CD4-positive, alpha-beta T cell (primary cell): ENCODE measurements at regions of chr19 and their contacts with region 1.

Region 1: GRCh38 chr19:17859533-17860330 is at the start of gene RPL18A:
- DNase-seq: peak; percentile 96 to 100 (median 99)
- ATAC-seq: peak; percentile 95
- H3K4me3 ChIP-seq: peak within 1 kb of the TSS; percentile 86
- H3K4me3 Mint-ChIP-seq: peak within 1 kb of the TSS; percentile 100
- H3K27ac ChIP-seq: peak within 1 kb of the TSS; percentile 1 to 71
- H3K27ac Mint-ChIP-seq: peak within 1 kb of the TSS; percentile 88
- H3K4me1 ChIP-seq: peaks cover 37% of the 10 kb centered on the region
- H3K4me1 Mint-ChIP-seq: peaks cover 33% of the 10 kb centered on the region
- H3K27me3 ChIP-seq: no peaks in the 10 kb centered on the region
- H3K27me3 Mint-ChIP-seq: no peaks in the 10 kb centered on the region
- CTCF ChIP-seq: peak; percentile 82
- total RNA-seq, gene RPL18A: 4,157 to 4,260 TPM

Region 2: DNA sequence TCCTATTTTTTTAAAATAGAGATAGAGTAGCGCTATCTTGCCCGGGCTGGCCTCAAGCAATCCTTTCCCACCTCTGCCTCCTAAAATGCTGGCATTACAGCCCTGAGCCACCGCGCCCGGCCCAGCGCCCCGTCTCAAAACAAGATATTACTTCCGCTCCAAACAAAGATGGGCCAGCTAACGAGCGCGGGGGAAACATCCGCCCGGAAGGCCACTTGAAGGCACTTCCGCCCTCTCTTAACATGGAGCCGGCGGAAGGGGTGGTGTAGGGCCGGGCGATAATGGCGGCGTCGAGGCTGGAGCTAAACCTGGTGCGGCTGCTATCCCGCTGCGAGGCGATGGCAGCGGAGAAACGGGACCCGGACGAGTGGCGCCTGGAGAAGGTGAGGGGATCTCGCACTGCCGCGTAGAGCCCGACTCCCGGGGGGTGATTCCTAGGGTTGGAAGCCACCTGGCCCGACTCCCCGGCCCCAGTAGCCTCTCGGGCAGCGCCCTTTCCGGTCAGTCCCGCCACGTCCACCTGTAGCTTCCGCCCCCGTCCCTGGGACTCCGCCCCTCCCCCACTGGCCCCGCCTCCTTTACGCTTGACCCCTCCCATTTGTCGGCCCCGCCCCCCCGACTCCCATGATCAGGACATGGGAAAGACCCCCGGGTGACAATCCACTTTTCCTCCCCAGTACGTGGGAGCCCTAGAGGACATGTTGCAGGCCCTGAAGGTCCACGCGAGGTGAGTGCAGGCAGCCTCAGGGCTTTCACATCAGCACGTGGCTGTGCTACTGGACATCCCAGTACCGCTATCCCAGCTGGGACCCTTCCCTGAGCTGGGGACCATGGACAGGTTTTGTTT is 644.4 kb before region 1 on chr19 and contains the start of gene USE1:
- CTCF ChIA-PET with region 1: no interaction called
- POLR2A ChIA-PET with region 1: no interaction called
- intact Hi-C with region 1: no loop called
- DNase-seq: peak; percentile 80 to 95 (median 85)
- ATAC-seq: peak; percentile 98
- H3K4me3 ChIP-seq: peak within 1 kb of the TSS; percentile 93
- H3K4me3 Mint-ChIP-seq: peak within 1 kb of the TSS; percentile 88
- H3K27ac ChIP-seq: peak within 1 kb of the TSS; percentile 74 to 97
- H3K27ac Mint-ChIP-seq: peak within 1 kb of the TSS; percentile 94
- H3K4me1 ChIP-seq: peaks cover 22% of the 10 kb centered on the region
- H3K4me1 Mint-ChIP-seq: peaks cover 11% of the 10 kb centered on the region
- H3K27me3 ChIP-seq: no peaks in the 10 kb centered on the region
- H3K27me3 Mint-ChIP-seq: no peaks in the 10 kb centered on the region
- CTCF ChIP-seq: no peak
- total RNA-seq, gene USE1: 23.1 to 24.3 TPM

Region 3: DNA sequence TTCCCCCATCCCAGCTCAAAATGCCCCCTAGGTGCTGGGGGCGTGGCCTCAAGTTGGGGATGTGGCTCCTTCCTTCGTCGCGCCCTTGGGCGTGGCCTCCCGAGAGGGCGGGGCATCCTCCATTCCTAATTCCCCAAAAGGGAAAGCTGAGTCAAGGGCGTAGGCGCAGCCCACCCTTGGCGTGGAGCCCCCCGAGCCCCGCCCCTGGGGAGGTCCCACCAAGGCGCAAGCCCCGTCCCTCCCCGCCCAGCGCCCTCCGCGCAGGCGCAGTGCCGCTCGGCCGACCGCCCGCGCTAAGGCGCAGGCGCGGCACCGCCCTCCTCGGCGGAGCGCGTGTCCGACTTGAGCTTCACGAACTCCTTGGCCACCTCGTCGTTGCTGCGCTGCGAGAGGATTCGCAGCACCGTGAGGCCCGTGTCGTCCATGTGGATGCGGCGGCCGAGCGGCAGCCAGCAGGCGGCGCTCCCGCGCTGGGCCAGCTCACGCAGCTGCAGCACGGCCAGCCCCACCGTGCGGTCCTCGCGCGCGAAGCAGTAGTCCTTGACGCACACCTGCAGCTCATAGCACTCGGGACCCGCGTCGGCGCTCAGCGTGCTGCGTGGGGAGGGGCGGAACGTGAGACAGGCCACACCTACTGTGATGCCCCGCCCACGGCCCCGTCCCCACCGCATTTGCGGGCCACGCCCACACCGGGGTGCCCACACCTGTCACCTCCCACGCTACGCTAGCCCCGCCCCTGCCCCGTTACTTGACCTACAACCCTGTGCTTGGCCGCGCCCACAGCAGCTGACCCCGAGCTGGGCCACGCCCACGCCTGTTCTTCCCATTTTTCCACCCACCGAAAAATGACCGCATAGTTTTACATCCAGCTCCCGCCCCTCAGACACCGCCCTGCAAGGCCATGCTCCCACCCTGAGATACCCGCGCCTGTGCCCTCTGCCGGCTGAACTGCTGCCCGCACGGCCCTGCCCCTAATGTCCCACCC is 253.7 kb before region 1 on chr19:
- CTCF ChIA-PET with region 1: interaction called, 5 read pairs
- POLR2A ChIA-PET with region 1: no interaction called
- intact Hi-C with region 1: loop called (anchors 1 to 10 kb)
- DNase-seq: peak; percentile 65 to 95 (median 82)
- ATAC-seq: peak; percentile 97
- H3K4me3 ChIP-seq: peak overlapping the region; percentile 43
- H3K4me3 Mint-ChIP-seq: peak overlapping the region; percentile 81
- H3K27ac ChIP-seq: no peak overlapping the region
- H3K27ac Mint-ChIP-seq: peak overlapping the region; percentile 27
- H3K4me1 ChIP-seq: peaks cover 14% of the 10 kb centered on the region
- H3K4me1 Mint-ChIP-seq: peaks cover 11% of the 10 kb centered on the region
- H3K27me3 ChIP-seq: peaks cover 21 to 25% of the 10 kb centered on the region in 2 experiments
- H3K27me3 Mint-ChIP-seq: peaks cover 36% of the 10 kb centered on the region
- CTCF ChIP-seq: peak; percentile 58

Region 4: DNA sequence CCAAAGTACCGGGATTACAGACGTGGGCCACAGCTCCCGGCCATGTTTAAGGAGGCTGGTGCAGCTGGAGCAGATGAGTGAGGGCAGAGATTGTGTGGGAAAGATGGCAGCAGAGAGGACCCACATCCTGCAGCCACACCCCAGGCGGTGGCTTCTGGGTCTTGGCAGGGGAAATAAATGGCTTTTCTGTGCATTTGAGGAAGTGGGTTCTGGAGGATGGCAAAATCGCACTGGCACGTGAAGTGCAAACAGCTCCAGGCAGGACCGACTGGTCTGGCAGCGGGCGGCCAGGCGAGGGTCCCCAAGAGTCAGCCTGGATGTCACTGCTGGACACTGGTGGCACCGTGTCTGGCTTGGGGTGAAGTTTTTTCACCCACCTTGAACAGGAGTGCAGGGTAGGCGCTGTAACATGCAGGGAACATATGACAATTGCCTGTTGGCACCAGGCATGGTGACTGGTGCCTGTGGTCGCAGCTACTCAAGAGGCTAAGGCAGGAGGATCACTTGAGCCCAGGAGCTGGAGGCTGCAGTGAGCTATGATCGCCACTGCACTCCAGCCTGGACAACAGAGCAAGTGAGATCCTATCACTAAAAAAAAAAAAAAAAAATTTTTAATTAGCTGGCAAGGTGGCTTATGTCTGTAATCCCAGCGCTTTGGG is 56.3 kb before region 1 on chr19:
- CTCF ChIA-PET with region 1: interaction called, 4 read pairs
- POLR2A ChIA-PET with region 1: interaction called, 12 read pairs
- intact Hi-C with region 1: no loop called
- DNase-seq: peak in 11 of 14 experiments; percentile 24 to 82 (median 43)
- ATAC-seq: peak; percentile 92
- H3K4me3 ChIP-seq: peak overlapping the region; percentile 14
- H3K4me3 Mint-ChIP-seq: peak overlapping the region; percentile 83
- H3K27ac ChIP-seq: peak overlapping the region in 1 of 2 donors; percentile 30
- H3K27ac Mint-ChIP-seq: peak overlapping the region; percentile 82
- H3K4me1 ChIP-seq: peaks cover 43% of the 10 kb centered on the region
- H3K4me1 Mint-ChIP-seq: peaks cover 56% of the 10 kb centered on the region
- H3K27me3 ChIP-seq: no peaks in the 10 kb centered on the region
- H3K27me3 Mint-ChIP-seq: no peaks in the 10 kb centered on the region
- CTCF ChIP-seq: no peak

Region 5: DNA sequence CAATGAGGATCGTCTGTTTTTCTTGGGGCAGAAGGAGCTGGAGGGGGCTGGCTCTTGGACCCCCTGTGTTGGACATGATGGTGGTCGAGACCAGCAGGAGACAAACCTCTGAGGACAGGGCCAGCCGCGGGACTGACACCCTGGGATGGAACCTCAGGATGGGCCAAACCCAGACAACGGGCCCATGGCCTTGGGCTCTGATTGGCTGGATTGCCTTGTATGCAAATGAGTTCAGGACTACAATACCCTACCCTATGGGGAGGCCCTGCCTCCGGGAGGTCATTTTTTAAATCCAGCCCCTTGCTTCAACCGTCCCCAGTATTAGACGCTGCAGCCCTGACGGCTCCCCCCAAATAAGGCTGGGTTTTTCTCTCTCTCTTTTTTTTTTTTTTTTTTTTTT is 34.0 kb after region 1 on chr19:
- CTCF ChIA-PET with region 1: no interaction called
- POLR2A ChIA-PET with region 1: no interaction called
- intact Hi-C with region 1: no loop called
- DNase-seq: no peak
- ATAC-seq: no peak
- H3K4me3 ChIP-seq: no peak overlapping the region
- H3K4me3 Mint-ChIP-seq: no peak overlapping the region
- H3K27ac ChIP-seq: no peak overlapping the region
- H3K27ac Mint-ChIP-seq: no peak overlapping the region
- H3K4me1 ChIP-seq: no peaks in the 10 kb centered on the region
- H3K4me1 Mint-ChIP-seq: no peaks in the 10 kb centered on the region
- H3K27me3 ChIP-seq: no peaks in the 10 kb centered on the region
- H3K27me3 Mint-ChIP-seq: peaks cover 4% of the 10 kb centered on the region
- CTCF ChIP-seq: no peak

Region 6: DNA sequence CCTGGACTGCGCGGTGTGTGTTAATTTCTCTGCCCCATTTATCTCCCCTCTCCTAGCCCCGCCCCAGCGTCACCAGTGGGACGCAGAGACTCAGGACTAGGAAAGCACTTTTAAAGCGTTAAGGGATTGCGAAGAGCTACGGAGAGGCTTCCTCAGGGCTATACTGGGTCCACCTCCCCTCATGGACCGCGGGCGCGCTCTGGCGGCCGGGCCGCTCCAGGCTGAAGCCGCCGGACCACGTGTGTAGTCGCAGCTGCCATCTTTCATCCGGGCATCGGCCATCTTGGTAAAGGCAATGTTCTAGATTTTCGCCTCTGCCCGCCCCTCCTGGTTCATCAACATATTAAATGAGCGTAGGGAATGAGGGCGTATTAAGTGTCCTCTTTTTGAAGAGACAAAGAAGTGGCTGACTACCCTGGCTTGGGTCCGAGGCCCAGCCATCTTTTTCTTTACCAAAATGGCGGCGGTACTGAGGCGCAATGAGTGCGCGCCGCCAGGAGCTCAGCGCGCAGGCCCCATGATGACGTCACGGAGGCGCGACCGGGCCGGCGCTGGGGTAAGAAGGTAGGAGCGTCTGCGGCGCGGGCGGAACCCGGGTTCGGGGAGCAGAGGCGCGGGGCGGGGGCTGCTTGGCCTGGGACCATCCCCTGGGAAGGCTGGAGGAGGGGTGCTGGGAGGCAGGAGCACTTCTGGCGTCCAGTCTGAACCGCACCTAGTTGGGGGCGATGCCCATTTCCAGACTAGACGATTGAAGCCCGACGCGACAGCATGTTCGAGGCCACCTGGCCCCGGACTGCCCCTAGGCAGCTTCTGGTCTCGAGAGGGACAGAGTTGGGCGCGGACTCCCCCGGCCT is 73.0 kb after region 1 on chr19 and contains the start of gene CCDC124:
- CTCF ChIA-PET with region 1: interaction called, 226 read pairs
- POLR2A ChIA-PET with region 1: interaction called, 275 read pairs
- intact Hi-C with region 1: loop called (anchors 1 kb)
- DNase-seq: peak; percentile 84 to 97 (median 92)
- ATAC-seq: peak; percentile 95
- H3K4me3 ChIP-seq: peak within 1 kb of the TSS; percentile 76
- H3K4me3 Mint-ChIP-seq: peak within 1 kb of the TSS; percentile 94
- H3K27ac ChIP-seq: peak within 1 kb of the TSS; percentile 81 to 93
- H3K27ac Mint-ChIP-seq: peak within 1 kb of the TSS; percentile 96
- H3K4me1 ChIP-seq: peaks cover 22% of the 10 kb centered on the region
- H3K4me1 Mint-ChIP-seq: peaks cover 19% of the 10 kb centered on the region
- H3K27me3 ChIP-seq: no peaks in the 10 kb centered on the region
- H3K27me3 Mint-ChIP-seq: no peaks in the 10 kb centered on the region
- CTCF ChIP-seq: peak; percentile 83
- total RNA-seq, gene CCDC124: 26.9 to 28.1 TPM

Region 7: DNA sequence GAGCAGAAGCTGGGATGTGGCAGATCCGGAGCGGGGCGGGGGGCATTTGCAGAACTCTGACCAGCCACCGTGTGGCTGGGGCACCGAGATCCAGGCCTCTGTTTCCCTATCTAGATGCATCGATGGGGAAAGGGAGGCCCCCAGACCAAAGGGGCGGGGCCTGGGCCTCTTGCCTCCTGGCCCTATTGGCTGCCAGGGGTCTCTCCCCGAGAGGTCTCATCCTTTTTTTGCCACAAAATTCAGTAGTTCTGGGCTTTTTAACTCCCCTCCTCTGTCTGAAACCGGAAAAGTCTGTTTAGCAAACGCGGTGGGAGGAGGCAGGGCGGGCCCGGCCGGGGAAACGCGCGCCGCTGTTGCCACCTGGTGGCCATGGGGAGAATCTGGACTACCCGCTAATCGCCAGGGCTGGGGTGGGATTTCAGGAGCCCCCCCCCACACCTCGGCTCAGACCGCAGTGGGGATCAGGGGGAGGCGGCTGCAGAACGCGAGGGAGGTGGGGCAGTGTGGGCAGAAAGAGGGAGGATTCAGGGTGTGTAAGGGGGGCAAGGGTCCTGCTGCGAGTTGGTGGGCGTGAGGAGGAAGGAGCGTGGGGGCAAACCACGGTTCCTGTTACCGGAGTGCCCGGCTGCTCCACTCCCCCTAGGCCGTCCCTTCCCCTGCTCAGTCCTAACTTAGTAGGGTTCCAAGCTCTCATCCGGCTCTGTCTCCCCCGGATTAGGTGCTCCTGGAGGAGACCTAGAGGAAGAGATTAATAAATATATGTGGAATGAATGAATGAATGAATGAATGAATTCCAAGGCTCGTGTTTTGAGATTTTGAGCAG is 198.7 kb after region 1 on chr19:
- CTCF ChIA-PET with region 1: no interaction called
- POLR2A ChIA-PET with region 1: interaction called, 3 read pairs
- intact Hi-C with region 1: loop called in 1 of 2 experiments (anchors 5 kb)
- DNase-seq: peak; percentile 74 to 91 (median 82)
- ATAC-seq: peak; percentile 97
- H3K4me3 ChIP-seq: peak overlapping the region; percentile 25
- H3K4me3 Mint-ChIP-seq: no peak overlapping the region
- H3K27ac ChIP-seq: peak overlapping the region in 1 of 2 donors; percentile 22
- H3K27ac Mint-ChIP-seq: peak overlapping the region; percentile 63
- H3K4me1 ChIP-seq: peaks cover 13% of the 10 kb centered on the region
- H3K4me1 Mint-ChIP-seq: peaks cover 17% of the 10 kb centered on the region
- H3K27me3 ChIP-seq: no peaks in the 10 kb centered on the region
- H3K27me3 Mint-ChIP-seq: no peaks in the 10 kb centered on the region
- CTCF ChIP-seq: peak; percentile 98